Activated T-helper 2 cell treated with anti-CD3 and anti-CD28 coated beads, Interferon-gamma antibody, Interleukin-2, Interleukin-4, amounts not matched to agents 10 μg/mL and 5 μg/mL and 100 μg/mL, durations not matched to agents 14 hours and 24 hours and 36 hours (primary cell): ENCODE measurements at regions of chr17 and their contacts with region 1.

Region 1: DNA sequence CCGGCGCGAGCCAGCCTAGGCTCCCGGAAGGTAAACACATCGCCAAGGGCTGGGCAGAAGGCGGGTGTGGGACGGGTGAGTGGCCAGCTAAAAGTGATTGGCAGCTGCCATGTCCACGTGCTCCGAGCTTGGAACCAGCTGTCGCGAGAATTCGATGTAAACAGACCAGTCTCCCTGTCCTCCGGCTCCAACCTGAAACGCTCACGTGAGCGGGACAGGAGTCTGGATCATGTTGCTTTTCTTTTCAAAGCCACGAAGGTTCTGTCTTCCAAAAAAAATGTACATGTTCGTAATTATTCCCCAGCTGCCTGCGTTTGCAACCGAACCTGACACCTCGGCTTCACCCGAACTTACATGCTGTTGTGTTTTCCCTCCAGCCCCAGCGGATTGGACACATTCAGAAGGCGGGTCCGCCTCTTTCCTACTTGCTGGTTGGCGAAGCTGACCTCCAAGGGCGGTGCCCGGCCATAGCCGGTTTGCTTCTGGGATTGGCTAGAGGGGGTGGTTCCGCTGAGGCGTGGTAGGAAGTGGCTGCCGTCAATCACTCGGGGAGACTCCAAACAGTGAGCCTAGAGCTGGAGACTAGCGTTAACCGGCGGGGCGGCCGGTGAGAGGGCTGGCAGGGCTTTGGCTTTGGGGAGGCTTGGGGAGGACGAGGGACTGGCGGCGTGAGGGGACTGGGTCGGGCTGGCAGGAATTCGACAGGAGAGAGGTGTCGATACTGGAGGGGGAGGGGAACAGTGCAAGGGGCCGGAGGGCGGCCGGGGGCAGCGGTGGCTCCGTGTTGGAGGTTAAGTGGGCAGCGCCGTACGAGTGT is at the start of gene BCAS3:
- DNase-seq: peak; percentile 97
- H3K4me3 Mint-ChIP-seq: peak within 1 kb of the TSS; percentile 91
- H3K27ac Mint-ChIP-seq: peak within 1 kb of the TSS; percentile 70
- H3K4me1 Mint-ChIP-seq: peaks cover 16% of the 10 kb centered on the region
- H3K27me3 Mint-ChIP-seq: no peaks in the 10 kb centered on the region
- total RNA-seq, gene BCAS3: 10.7 and 13.5 TPM in 2 replicates

Region 2: DNA sequence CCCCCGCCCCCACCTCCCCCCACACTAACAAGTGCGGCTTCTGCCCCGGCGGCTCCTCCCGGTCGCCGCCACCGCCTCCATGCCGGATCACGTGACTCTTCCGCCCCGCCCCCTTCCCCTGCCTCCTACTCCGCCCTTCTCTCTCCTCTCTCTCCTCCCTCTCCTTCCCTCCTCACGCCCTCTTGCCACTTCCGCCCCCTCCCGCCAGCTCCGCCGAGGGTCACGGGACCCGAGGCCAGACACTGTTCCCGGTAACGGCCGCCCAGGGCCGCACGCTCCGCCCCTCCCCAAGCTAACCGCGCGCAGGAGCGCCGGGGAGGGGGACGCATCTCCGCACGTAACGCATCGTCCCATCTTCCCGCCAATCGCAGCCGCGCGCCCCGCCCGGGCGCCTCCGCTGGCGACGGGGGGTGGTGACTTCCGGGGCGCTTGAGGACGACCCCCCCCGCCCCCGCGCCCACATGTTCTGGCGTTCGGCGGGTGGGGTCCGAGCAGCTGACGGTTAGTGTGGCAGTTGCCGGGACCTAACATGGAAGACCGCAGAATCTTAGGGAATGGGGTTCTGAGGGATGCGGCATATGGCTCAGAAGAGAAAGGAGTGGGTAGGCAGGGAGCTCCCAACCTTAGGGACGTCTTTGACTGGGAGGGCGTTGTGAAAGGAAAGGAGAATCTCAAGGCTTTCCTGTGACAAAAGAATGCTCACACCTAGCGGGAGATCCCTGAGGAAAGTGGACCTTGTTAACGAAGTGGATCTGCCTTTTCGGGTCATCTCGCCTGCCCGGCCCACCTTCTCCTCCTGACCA is 285.3 kb before region 1 on chr17 and contains the start of gene USP32:
- intact Hi-C with region 1: loop called (anchors 5 kb)
- DNase-seq: peak; percentile 97
- H3K4me3 Mint-ChIP-seq: peak within 1 kb of the TSS; percentile 93
- H3K27ac Mint-ChIP-seq: peak within 1 kb of the TSS; percentile 97
- H3K4me1 Mint-ChIP-seq: peaks cover 50% of the 10 kb centered on the region
- H3K27me3 Mint-ChIP-seq: no peaks in the 10 kb centered on the region
- total RNA-seq, gene USP32: 31.9 and 36.3 TPM in 2 replicates

Region 3: DNA sequence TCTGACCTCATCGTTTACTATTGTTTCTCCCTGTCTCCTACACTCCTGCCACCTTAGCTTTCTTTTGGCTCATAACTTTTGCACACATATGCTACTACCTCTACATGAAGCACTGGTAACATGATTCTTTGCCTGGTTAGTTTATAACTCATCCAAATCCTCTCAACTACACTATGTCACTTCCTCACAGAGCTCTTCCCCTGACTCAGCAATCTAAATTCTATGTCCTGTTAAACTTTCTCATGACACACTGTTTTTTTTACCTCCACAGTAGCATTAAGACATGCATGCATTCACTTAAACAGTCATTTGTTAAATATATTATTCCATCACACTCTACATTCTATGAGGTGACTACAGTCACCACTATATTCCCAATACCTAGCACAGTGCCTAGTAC is 171.2 kb before region 1 on chr17:
- intact Hi-C with region 1: no loop called
- DNase-seq: no peak
- H3K4me3 Mint-ChIP-seq: no peak overlapping the region
- H3K27ac Mint-ChIP-seq: no peak overlapping the region
- H3K4me1 Mint-ChIP-seq: peaks cover 8% of the 10 kb centered on the region
- H3K27me3 Mint-ChIP-seq: no peaks in the 10 kb centered on the region

Region 4: GRCh38 chr17:60599620-60600489 is 77.7 kb before region 1 on chr17 and contains the start of gene PPM1D:
- intact Hi-C with region 1: loop called (anchors 1 kb)
- DNase-seq: peak; percentile 97
- H3K4me3 Mint-ChIP-seq: peak within 1 kb of the TSS; percentile 96
- H3K27ac Mint-ChIP-seq: peak within 1 kb of the TSS; percentile 94
- H3K4me1 Mint-ChIP-seq: peaks cover 31% of the 10 kb centered on the region
- H3K27me3 Mint-ChIP-seq: no peaks in the 10 kb centered on the region
- total RNA-seq, gene PPM1D: 14.9 and 15.1 TPM in 2 replicates

Region 5: GRCh38 chr17:60720763-60721531 is 43.4 kb after region 1 on chr17:
- intact Hi-C with region 1: no loop called
- DNase-seq: no peak
- H3K4me3 Mint-ChIP-seq: no peak overlapping the region
- H3K27ac Mint-ChIP-seq: no peak overlapping the region
- H3K4me1 Mint-ChIP-seq: no peaks in the 10 kb centered on the region
- H3K27me3 Mint-ChIP-seq: peaks cover 3% of the 10 kb centered on the region